Common myeloid progenitor, CD34-positive (primary cell): ENCODE measurements at regions of chr2 and their contacts with region 1.

Region 1: DNA sequence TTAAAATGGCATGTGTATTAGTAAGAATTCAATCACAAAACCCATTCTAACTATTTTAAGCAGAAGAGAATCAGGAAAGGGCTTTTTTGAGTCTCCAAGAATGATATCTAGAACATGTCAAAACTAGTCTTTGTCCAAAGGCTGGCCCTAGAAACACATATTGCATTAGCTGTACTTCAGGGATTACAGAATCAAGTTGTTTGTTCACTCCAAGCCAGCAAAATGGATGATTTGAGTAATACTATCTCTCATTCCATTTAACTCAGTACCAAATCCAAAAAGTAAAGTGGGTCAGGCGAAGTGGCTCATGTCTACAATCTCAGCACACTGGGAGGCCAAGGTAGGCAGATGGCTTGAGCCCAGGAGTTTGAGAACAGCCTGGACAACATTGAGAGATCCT is 41.3 kb downstream of the ATF2 start:
- DNase-seq: no peak
- H3K4me3 ChIP-seq: no peak overlapping the region
- H3K27ac ChIP-seq: no peak overlapping the region
- H3K4me1 ChIP-seq: no peaks in the 10 kb centered on the region
- H3K27me3 ChIP-seq: no peaks in the 10 kb centered on the region

Region 2: DNA sequence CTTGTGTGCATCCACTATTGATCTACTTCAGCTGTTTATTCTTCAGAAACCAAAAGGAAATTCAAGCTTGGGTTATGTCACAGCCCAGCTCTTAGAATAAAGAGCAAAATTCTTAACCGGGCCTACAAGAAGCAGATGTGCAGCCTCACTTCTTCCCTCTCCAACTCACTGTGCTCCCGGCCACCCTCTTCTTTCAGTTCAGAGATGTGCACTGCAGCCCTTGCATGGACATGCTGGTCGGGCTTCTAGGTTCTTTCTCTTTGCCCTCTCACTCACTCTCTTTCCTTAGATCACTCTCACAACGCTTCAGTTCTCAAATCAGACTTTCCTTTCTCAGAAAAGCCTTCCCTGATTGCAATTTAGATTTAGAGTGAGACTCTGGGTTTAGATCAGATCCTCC is 225.6 kb before region 1 on chr2:
- CTCF ChIA-PET with region 1: no interaction called
- POLR2A ChIA-PET with region 1: no interaction called
- DNase-seq: no peak
- H3K4me3 ChIP-seq: no peak overlapping the region
- H3K27ac ChIP-seq: no peak overlapping the region
- H3K4me1 ChIP-seq: peaks cover 0 to 3% (median 0%) of the 10 kb centered on the region in 4 experiments
- H3K27me3 ChIP-seq: no peaks in the 10 kb centered on the region

Region 3: GRCh38 chr2:175111200-175111657 is 15.4 kb before region 1 on chr2:
- CTCF ChIA-PET with region 1: interaction called, 10 read pairs
- POLR2A ChIA-PET with region 1: no interaction called
- DNase-seq: peak; percentile 43 to 76 (median 70)
- H3K4me3 ChIP-seq: no peak overlapping the region
- H3K27ac ChIP-seq: no peak overlapping the region
- H3K4me1 ChIP-seq: no peaks in the 10 kb centered on the region
- H3K27me3 ChIP-seq: no peaks in the 10 kb centered on the region

Region 4: GRCh38 chr2:175156534-175156933 is 29.9 kb after region 1 on chr2:
- CTCF ChIA-PET with region 1: no interaction called
- POLR2A ChIA-PET with region 1: no interaction called
- DNase-seq: no peak
- H3K4me3 ChIP-seq: no peak overlapping the region
- H3K27ac ChIP-seq: no peak overlapping the region
- H3K4me1 ChIP-seq: no peaks in the 10 kb centered on the region
- H3K27me3 ChIP-seq: no peaks in the 10 kb centered on the region